IMR-90 (cell line): ENCODE measurements at regions of chr2 and their contacts with region 1.

Region 1: GRCh38 chr2:182426082-182426917 is 536 bp downstream of the PDE1A start:
- DNase-seq: peak; percentile 57
- ATAC-seq: peak; percentile 85
- H3K4me3 ChIP-seq: peak overlapping the region; percentile 20; the same call in 1 of the 2 replicates
- H3K27ac ChIP-seq: peak overlapping the region; percentile 61; the same call in 1 of the 2 replicates
- H3K4me1 ChIP-seq: peaks cover 6% of the 10 kb centered on the region; the same call in 1 of the 2 replicates
- H3K27me3 ChIP-seq: no peaks in the 10 kb centered on the region
- CTCF ChIP-seq: no peak
- POLR2A ChIP-seq: no peak
- RAD21 ChIP-seq: no peak

Region 2: GRCh38 chr2:182088681-182089320 is 337.5 kb before region 1 on chr2:
- CTCF ChIA-PET with region 1: no interaction called
- POLR2A ChIA-PET with region 1: no interaction called
- dilution Hi-C with region 1: no loop called
- in situ Hi-C with region 1: no loop called
- intact Hi-C with region 1: no loop called
- DNase-seq: peak; percentile 45
- ATAC-seq: peak; percentile 73
- H3K4me3 ChIP-seq: no peak overlapping the region
- H3K27ac ChIP-seq: peak overlapping the region; percentile 95
- H3K4me1 ChIP-seq: peaks cover 7% of the 10 kb centered on the region
- H3K27me3 ChIP-seq: no peaks in the 10 kb centered on the region
- CTCF ChIP-seq: no peak
- POLR2A ChIP-seq: no peak
- RAD21 ChIP-seq: no peak

Region 3: GRCh38 chr2:182186132-182186735 is 240.1 kb before region 1 on chr2:
- CTCF ChIA-PET with region 1: no interaction called
- POLR2A ChIA-PET with region 1: no interaction called
- dilution Hi-C with region 1: no loop called
- in situ Hi-C with region 1: no loop called
- intact Hi-C with region 1: loop called (anchors 10 kb)
- DNase-seq: peak; percentile 34
- ATAC-seq: peak; percentile 73
- H3K4me3 ChIP-seq: no peak overlapping the region
- H3K27ac ChIP-seq: no peak overlapping the region
- H3K4me1 ChIP-seq: no peaks in the 10 kb centered on the region
- H3K27me3 ChIP-seq: no peaks in the 10 kb centered on the region; the same call in 1 of the 2 replicates
- CTCF ChIP-seq: peak; percentile 86
- POLR2A ChIP-seq: 0 out of 2 replicates have a peak, but pooled peaks have one; percentile 36
- RAD21 ChIP-seq: peak; percentile 86

Region 4: DNA sequence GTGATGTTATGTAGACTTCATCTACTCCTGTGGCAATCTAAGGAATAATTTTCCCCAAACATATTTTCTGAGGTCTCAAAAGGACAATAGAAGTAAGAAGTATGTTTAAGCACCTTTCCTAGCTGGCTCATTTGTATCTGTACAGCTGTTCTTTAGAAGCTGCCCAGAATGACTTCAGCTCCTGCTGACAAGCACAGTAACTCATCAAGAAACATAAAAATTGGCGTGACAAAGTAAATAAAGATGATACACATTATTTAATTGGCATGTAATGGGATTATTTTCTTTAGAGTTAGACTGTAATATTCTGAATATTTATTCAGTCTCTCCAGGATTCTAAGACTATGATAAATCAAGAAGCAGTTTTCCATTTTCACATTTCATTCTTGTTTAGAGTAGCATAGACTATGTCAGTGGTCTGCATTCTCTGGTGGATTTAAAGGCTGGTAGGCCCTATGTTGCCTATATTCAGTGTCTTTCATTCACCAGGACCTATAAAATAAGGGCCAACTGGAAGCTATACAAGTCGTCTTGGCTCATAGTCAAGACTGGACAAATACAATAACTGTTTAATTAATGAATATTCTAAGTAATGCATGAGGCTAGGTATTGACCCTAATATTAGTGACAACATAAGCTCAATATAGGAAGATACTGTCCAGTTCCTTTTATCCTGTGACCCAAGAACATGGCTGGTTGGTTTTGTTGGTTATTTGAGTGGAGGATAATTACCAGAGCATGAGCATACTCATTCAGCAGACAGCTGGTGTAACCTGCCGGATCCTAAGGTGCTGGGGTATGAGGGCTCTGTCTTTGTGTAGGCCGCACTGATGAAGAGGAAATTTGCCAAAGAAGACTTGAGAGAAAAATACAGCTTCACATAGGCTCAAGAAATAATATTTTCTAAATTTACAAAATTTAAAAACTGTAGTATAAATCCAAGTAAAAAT is 106.5 kb before region 1 on chr2:
- CTCF ChIA-PET with region 1: no interaction called
- POLR2A ChIA-PET with region 1: no interaction called
- dilution Hi-C with region 1: no loop called
- in situ Hi-C with region 1: no loop called
- intact Hi-C with region 1: loop called (anchors 5 kb)
- DNase-seq: no peak
- ATAC-seq: no peak
- H3K4me3 ChIP-seq: no peak overlapping the region
- H3K27ac ChIP-seq: no peak overlapping the region
- H3K4me1 ChIP-seq: peaks cover 6% of the 10 kb centered on the region
- H3K27me3 ChIP-seq: no peaks in the 10 kb centered on the region
- CTCF ChIP-seq: no peak
- POLR2A ChIP-seq: no peak
- RAD21 ChIP-seq: no peak